ENCODE measurements at regions of chr3 and their contacts with region 1.

Region 1: GRCh38 chr3:30628901-30629590 is 22.6 kb downstream of the TGFBR2 start:
- DNase-seq: peak; percentile 53
- ATAC-seq: peak; percentile 41
- H3K4me3 Mint-ChIP-seq: peak overlapping the region; percentile 25
- H3K27ac Mint-ChIP-seq: peak overlapping the region; percentile 79
- H3K4me1 Mint-ChIP-seq: peaks cover 90% of the 10 kb centered on the region
- H3K27me3 Mint-ChIP-seq: no peaks in the 10 kb centered on the region

Region 2: DNA sequence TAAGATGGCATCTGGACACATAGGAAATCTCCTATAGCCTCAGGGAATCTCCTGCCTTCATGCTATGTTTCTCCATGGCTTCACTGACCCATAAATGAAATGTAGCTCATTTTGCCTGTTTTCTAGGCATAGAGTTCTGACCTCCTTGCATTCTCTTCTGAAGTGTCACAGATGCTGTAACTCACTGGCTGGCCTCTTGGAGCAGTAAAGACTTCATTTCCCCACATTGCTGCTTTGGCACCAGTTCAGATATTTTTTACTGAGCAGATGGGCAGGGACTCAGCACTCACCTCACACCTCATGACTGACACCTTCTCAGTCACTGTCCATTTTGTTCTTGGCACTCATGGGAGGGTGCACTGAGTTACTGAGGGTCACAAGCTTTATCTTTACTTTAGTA is 309.3 kb before region 1 on chr3:
- CTCF ChIA-PET with region 1: interaction called, 11 read pairs
- POLR2A ChIA-PET with region 1: no interaction called
- DNase-seq: peak; percentile 36
- ATAC-seq: peak; percentile 68
- H3K4me3 Mint-ChIP-seq: no peak overlapping the region
- H3K27ac Mint-ChIP-seq: no peak overlapping the region
- H3K4me1 Mint-ChIP-seq: peaks cover 2% of the 10 kb centered on the region
- H3K27me3 Mint-ChIP-seq: no peaks in the 10 kb centered on the region

Region 3: DNA sequence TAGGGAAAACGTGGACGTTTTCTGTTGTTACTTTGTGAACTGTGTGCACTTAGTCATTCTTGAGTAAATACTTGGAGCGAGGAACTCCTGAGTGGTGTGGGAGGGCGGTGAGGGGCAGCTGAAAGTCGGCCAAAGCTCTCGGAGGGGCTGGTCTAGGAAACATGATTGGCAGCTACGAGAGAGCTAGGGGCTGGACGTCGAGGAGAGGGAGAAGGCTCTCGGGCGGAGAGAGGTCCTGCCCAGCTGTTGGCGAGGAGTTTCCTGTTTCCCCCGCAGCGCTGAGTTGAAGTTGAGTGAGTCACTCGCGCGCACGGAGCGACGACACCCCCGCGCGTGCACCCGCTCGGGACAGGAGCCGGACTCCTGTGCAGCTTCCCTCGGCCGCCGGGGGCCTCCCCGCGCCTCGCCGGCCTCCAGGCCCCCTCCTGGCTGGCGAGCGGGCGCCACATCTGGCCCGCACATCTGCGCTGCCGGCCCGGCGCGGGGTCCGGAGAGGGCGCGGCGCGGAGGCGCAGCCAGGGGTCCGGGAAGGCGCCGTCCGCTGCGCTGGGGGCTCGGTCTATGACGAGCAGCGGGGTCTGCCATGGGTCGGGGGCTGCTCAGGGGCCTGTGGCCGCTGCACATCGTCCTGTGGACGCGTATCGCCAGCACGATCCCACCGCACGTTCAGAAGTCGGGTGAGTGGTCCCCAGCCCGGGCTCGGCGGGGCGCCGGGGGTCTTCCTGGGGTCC is 22.6 kb before region 1 on chr3 and contains the start of gene TGFBR2:
- CTCF ChIA-PET with region 1: interaction called, 91 read pairs
- POLR2A ChIA-PET with region 1: interaction called, 39 read pairs
- DNase-seq: peak; percentile 93
- ATAC-seq: peak; percentile 75
- H3K4me3 Mint-ChIP-seq: peak within 1 kb of the TSS; percentile 94
- H3K27ac Mint-ChIP-seq: peak within 1 kb of the TSS; percentile 98
- H3K4me1 Mint-ChIP-seq: peaks cover 64% of the 10 kb centered on the region
- H3K27me3 Mint-ChIP-seq: no peaks in the 10 kb centered on the region
- total RNA-seq, gene TGFBR2: 62.7 to 64.5 TPM

Region 4: DNA sequence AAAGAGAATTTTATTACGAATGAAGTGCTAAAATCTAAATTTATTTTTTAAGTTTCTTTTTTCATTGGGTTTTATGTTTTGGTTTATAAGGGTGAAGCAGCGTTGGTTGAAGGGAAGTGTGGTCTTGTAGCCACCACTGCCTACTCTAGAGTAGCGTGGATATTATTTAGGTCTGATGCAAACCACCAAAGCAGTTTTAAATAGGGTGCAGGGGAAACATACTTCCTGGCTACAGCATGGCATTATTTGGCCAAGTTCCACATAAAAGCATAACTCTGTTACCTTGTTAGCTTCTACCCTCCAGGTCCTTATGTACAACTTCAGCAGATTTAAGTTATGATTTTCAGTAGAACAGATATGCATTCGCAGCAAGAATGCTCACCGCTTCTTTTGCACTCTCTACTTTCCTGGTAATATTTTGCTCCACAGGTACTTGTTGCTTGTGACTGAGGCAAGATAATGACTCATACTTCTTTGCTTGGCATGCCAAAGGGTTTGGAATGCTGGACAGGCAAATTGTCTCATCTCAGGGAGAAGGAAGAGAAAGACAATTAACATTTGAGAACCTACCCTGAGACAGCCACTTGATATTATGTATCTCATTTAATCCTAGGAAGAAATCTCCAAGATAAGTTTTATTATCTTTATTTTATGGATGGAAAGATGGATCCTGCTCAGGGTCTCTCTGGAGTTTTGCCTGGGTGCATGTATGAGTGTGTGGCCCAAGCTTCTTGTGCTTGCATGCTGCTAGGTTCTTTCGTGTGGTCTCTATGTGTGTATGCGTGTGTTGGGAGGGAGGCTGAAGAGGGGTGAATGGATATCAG is 17.2 kb before region 1 on chr3:
- CTCF ChIA-PET with region 1: interaction called, 91 read pairs
- POLR2A ChIA-PET with region 1: interaction called, 39 read pairs
- DNase-seq: no peak
- ATAC-seq: peak; percentile 37
- H3K4me3 Mint-ChIP-seq: peak overlapping the region; percentile 87
- H3K27ac Mint-ChIP-seq: peak overlapping the region; percentile 85
- H3K4me1 Mint-ChIP-seq: peaks cover 71% of the 10 kb centered on the region
- H3K27me3 Mint-ChIP-seq: no peaks in the 10 kb centered on the region

Region 5: DNA sequence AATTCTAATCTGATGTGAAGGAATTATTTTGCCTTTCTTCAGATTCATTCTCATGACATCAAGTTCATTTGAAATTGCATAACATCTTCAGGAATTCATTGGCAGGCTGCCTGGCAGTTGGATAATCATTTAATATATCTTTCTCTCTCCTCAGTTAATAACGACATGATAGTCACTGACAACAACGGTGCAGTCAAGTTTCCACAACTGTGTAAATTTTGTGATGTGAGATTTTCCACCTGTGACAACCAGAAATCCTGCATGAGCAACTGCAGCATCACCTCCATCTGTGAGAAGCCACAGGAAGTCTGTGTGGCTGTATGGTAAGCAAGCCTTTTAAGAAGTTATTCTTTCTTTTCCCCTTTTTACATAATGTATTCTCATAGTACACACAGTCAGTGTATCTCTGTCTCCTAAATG is 15.6 kb after region 1 on chr3:
- CTCF ChIA-PET with region 1: interaction called, 42 read pairs
- POLR2A ChIA-PET with region 1: interaction called, 20 read pairs
- DNase-seq: peak; percentile 76
- ATAC-seq: peak; percentile 65
- H3K4me3 Mint-ChIP-seq: peak overlapping the region; percentile 59
- H3K27ac Mint-ChIP-seq: peak overlapping the region; percentile 93
- H3K4me1 Mint-ChIP-seq: peaks cover 98% of the 10 kb centered on the region
- H3K27me3 Mint-ChIP-seq: no peaks in the 10 kb centered on the region

Region 6: DNA sequence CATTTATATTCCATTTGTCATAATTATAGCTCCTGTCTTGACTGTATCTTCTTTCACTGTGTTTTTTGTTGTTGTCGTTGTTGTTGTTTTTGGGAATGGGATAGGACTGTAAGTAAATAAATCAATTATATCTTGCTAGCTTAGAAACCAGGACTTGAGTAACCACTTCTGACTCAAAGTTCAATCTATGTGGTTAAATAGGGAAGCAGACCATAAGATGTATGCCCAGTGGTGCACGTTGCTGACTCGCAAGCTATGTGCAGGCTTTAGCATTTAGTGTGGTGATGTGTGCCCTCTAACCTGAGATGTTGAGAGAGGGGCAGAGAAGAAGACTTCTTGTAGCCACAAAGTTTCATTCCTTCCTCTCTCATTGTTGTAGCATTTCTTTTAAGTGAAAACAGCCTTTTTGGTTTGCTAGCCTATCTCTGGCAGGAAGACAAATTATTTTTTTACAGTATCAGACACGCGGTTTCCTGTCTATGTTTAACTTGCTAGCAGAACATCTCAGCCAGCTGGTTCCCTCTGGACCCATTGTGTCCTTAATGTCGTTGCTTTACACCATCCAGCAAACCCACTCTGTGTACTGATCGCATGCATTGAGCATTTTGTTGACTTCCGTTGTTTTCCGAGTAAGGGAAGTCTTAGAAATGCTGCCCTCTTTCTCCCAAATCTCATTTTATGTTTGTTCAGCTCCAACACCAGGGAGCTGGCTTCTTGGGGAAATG is 29.4 kb after region 1 on chr3:
- CTCF ChIA-PET with region 1: interaction called, 18 read pairs
- POLR2A ChIA-PET with region 1: interaction called, 7 read pairs
- DNase-seq: peak; percentile 70
- ATAC-seq: peak; percentile 72
- H3K4me3 Mint-ChIP-seq: peak overlapping the region; percentile 45
- H3K27ac Mint-ChIP-seq: peak overlapping the region; percentile 93
- H3K4me1 Mint-ChIP-seq: peaks cover 99% of the 10 kb centered on the region
- H3K27me3 Mint-ChIP-seq: no peaks in the 10 kb centered on the region